ENCODE measurements at regions of chr7 and their contacts with region 1.

Region 1: DNA sequence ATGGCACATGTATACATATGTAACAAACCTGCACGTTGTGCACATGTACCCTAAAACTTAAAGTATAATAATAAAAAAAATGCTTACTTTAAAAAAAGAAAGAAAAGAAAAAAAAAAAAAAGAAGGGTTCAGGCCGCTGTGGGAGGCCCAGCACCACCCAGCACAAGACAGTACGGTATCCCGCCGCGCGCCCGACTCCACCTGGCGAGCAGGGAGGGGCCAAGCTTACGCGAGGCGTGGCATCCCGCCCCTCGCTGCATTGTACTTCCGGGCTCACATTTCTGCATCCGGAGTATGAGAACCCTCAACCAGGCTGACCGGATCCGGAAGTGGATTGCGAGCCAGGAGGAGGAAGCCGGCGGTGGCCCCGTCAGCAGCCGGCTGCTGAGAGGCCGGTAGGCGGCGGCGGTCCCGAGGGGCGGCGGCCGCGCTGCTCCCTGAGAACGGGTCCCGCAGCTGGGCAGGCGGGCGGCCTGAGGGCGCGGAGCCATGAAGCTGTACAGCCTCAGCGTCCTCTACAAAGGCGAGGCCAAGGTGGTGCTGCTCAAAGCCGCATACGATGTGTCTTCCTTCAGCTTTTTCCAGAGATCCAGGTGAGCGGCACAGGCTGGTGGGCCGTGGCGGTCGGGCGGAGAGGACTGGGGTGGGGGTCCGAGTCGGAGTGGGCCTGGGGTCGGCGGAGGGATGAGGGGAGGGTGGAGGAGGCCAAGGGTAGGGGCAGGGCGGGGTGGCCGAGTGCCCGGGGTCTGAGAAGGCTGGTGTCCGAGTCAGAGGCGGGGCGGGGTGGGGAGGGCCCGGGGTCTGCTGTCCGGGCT is at the start of gene YKT6:
- DNase-seq: peak; percentile 99
- CTCF ChIP-seq: peak; percentile 31

Region 2: DNA sequence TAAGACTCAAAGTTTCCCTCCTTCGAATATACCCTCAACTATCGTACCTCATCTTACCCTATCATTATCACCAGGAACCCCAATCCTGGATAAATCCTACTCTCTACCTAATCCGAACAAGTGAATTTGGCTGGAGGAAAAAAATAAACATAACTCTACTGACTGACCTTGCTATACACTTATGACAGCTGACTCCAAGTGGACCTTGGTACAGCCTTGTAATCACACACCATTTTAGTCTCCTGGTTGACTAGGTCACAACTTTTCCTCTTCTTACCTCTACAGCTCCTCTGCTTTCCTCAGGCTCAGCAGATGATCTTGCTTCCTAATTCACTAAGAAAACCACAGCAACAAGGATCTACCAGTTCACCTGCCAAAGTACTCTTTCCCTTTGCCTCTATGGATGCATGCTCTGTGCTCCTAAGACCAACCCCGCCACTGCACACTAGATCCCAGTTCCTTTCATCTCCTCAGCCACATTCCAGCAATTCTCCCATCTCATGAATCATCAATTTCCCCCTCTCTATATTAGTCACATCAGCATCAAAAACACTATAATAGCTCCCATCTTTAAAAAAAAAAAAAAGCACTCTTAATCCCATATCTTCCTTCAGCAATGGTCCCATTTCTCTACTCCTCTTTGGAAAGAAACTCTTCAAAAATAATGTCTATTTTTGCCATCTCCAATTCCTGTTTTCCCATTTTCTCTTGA is 507.0 kb before region 1 on chr7:
- CTCF ChIA-PET with region 1: no interaction called
- POLR2A ChIA-PET with region 1: no interaction called
- DNase-seq: no peak
- CTCF ChIP-seq: no peak

Region 3: GRCh38 chr7:44213877-44214388 is 13.1 kb after region 1 on chr7:
- CTCF ChIA-PET with region 1: interaction called, 12 read pairs
- POLR2A ChIA-PET with region 1: interaction called, 3 read pairs
- DNase-seq: no peak
- CTCF ChIP-seq: no peak